ENCODE measurements at regions of chr16 and their contacts with region 1.

Region 1: GRCh38 chr16:11797166-11797956 is at the start of gene ZC3H7A:
- DNase-seq: peak; percentile 82
- ATAC-seq: peak; percentile 93
- H3K4me3 ChIP-seq: peak within 1 kb of the TSS; percentile 99
- H3K27ac ChIP-seq: peak within 1 kb of the TSS; percentile 95
- H3K4me1 ChIP-seq: peaks cover 25% of the 10 kb centered on the region
- H3K27me3 ChIP-seq: no peaks in the 10 kb centered on the region
- CTCF ChIP-seq: peak; percentile 44 to 78 (median 50); a peak in 5 of 6 replicates
- EP300 ChIP-seq: no peak
- POLR2A ChIP-seq: peak; percentile 97
- RAD21 ChIP-seq: no peak
- polyA plus RNA-seq, gene ZC3H7A: 46.3 to 77.8 TPM

Region 2: GRCh38 chr16:11546608-11547061 is 250.7 kb before region 1 on chr16:
- CTCF ChIA-PET with region 1: no interaction called
- POLR2A ChIA-PET with region 1: no interaction called
- RAD21 ChIA-PET with region 1: no interaction called
- SMC1A ChIA-PET with region 1: no interaction called
- in situ Hi-C with region 1: loop called (anchors 25 kb)
- intact Hi-C with region 1: no loop called
- DNase-seq: no peak
- ATAC-seq: no peak
- H3K4me3 ChIP-seq: no peak overlapping the region
- H3K27ac ChIP-seq: no peak overlapping the region
- H3K4me1 ChIP-seq: no peaks in the 10 kb centered on the region
- H3K27me3 ChIP-seq: no peaks in the 10 kb centered on the region
- CTCF ChIP-seq: no peak
- EP300 ChIP-seq: no peak
- POLR2A ChIP-seq: no peak
- RAD21 ChIP-seq: no peak

Region 3: GRCh38 chr16:11667824-11668622 is 129.3 kb before region 1 on chr16 and contains the start of gene SNN:
- CTCF ChIA-PET with region 1: interaction called, 3 read pairs
- POLR2A ChIA-PET with region 1: interaction called, 9 read pairs
- RAD21 ChIA-PET with region 1: interaction called, 13 read pairs
- SMC1A ChIA-PET with region 1: interaction called, 3 read pairs
- in situ Hi-C with region 1: no loop called
- intact Hi-C with region 1: no loop called
- DNase-seq: no peak
- ATAC-seq: peak; percentile 70
- H3K4me3 ChIP-seq: peak within 1 kb of the TSS; percentile 67
- H3K27ac ChIP-seq: peak within 1 kb of the TSS; percentile 88
- H3K4me1 ChIP-seq: peaks cover 45% of the 10 kb centered on the region
- H3K27me3 ChIP-seq: no peaks in the 10 kb centered on the region
- CTCF ChIP-seq: no peak
- EP300 ChIP-seq: no peak
- POLR2A ChIP-seq: peak; percentile 59; the same call in 1 of the 2 replicates
- RAD21 ChIP-seq: no peak
- polyA plus RNA-seq, gene SNN: 2.2 to 5.2 TPM

Region 4: GRCh38 chr16:11734025-11734652 is 63.2 kb before region 1 on chr16:
- CTCF ChIA-PET with region 1: interaction called, 5 read pairs
- POLR2A ChIA-PET with region 1: interaction called, 164 read pairs
- RAD21 ChIA-PET with region 1: interaction called, 38 read pairs
- SMC1A ChIA-PET with region 1: interaction called, 124 read pairs
- in situ Hi-C with region 1: no loop called
- intact Hi-C with region 1: no loop called
- DNase-seq: no peak
- ATAC-seq: peak; percentile 47
- H3K4me3 ChIP-seq: peak overlapping the region; percentile 22
- H3K27ac ChIP-seq: peak overlapping the region; percentile 74
- H3K4me1 ChIP-seq: peaks cover 56% of the 10 kb centered on the region
- H3K27me3 ChIP-seq: no peaks in the 10 kb centered on the region
- CTCF ChIP-seq: no peak
- EP300 ChIP-seq: peak; percentile 38 to 73; a peak in 2 of 4 replicates
- POLR2A ChIP-seq: no peak
- RAD21 ChIP-seq: no peak

Region 5: GRCh38 chr16:11768849-11769248 is 28.5 kb before region 1 on chr16:
- CTCF ChIA-PET with region 1: interaction called, 34 read pairs
- POLR2A ChIA-PET with region 1: interaction called, 410 read pairs
- RAD21 ChIA-PET with region 1: interaction called, 33 read pairs
- SMC1A ChIA-PET with region 1: interaction called, 50 read pairs
- in situ Hi-C with region 1: no loop called
- intact Hi-C with region 1: no loop called
- DNase-seq: peak; percentile 58
- ATAC-seq: peak; percentile 80
- H3K4me3 ChIP-seq: peak overlapping the region; percentile 53
- H3K27ac ChIP-seq: peak overlapping the region; percentile 60
- H3K4me1 ChIP-seq: peaks cover 42% of the 10 kb centered on the region
- H3K27me3 ChIP-seq: no peaks in the 10 kb centered on the region
- CTCF ChIP-seq: no peak
- EP300 ChIP-seq: 0 out of 4 replicates have a peak, but pooled peaks of 1 of the 2 experiments have one; percentile 6
- POLR2A ChIP-seq: no peak
- RAD21 ChIP-seq: no peak

Region 6: GRCh38 chr16:11783319-11784037 is 13.9 kb before region 1 on chr16:
- CTCF ChIA-PET with region 1: interaction called, 62 read pairs
- POLR2A ChIA-PET with region 1: interaction called, 410 read pairs
- RAD21 ChIA-PET with region 1: interaction called, 174 read pairs
- SMC1A ChIA-PET with region 1: interaction called, 184 read pairs
- in situ Hi-C with region 1: no loop called
- intact Hi-C with region 1: loop called (anchors 2 kb)
- DNase-seq: peak; percentile 89
- ATAC-seq: peak; percentile 71
- H3K4me3 ChIP-seq: peak overlapping the region; percentile 67
- H3K27ac ChIP-seq: peak overlapping the region; percentile 99
- H3K4me1 ChIP-seq: peaks cover 34% of the 10 kb centered on the region
- H3K27me3 ChIP-seq: no peaks in the 10 kb centered on the region
- CTCF ChIP-seq: no peak
- EP300 ChIP-seq: peak; percentile 88 to 90
- POLR2A ChIP-seq: peak; percentile 61
- RAD21 ChIP-seq: no peak